B cell (primary cell): ENCODE measurements at regions of chr7 and their contacts with region 1.

Region 1: DNA sequence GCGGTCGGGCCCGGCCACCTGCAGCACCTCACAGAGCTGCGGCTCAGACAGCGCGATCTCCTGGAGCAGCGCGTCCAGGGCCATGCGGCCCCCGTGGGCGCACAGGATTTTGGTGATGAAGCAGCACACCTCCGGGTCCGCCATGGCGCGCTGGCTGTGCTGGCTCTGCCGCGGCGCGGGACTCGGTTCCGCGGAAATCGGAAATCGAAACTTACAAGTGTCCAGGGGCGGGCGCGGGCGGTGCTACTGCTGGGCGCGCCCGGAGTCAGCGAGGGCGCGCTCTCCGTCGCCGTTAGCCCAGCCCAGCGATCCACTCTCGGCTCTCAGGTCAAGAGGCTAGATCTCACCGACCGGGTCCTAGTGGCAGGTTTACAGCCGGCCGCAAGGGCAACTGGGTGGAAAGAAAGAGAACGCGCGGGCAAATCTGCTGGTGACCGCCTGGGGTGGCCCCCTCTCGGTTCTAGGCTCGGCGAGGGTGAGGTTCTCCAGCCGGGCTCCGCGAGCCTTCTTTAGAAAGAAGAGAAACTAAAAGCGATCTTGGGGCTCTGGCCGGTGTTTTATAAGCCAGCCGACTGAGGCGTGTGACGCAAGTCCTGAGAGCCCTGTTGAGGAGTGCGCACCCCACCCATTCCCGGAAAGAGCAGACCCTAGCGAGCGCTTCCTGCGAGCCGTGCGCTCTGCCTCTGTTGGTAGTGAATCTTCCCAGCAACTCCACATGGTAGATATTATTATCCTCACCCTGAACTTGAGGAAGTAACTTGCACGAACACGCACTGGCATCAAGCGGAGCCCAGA is at the start of gene ZC3HAV1:
- DNase-seq: peak; percentile 94
- ATAC-seq: peak; percentile 78
- H3K4me3 ChIP-seq: peak within 1 kb of the TSS; percentile 85 to 98 (median 95)
- H3K4me3 Mint-ChIP-seq: peak within 1 kb of the TSS; percentile 88
- H3K27ac ChIP-seq: peak within 1 kb of the TSS; percentile 90 to 96
- H3K27ac Mint-ChIP-seq: peak within 1 kb of the TSS; percentile 99
- H3K4me1 ChIP-seq: peaks cover 18 to 26% of the 10 kb centered on the region in 2 donors
- H3K4me1 Mint-ChIP-seq: peaks cover 34% of the 10 kb centered on the region
- H3K27me3 ChIP-seq: no peaks in the 10 kb centered on the region
- H3K27me3 Mint-ChIP-seq: no peaks in the 10 kb centered on the region
- CTCF ChIP-seq: no peak
- total RNA-seq, gene ZC3HAV1: 101 TPM in 2 replicates

Region 2: GRCh38 chr7:139133335-139134139 is 24.2 kb after region 1 on chr7:
- CTCF ChIA-PET with region 1: no interaction called
- POLR2A ChIA-PET with region 1: interaction called, 9 read pairs
- intact Hi-C with region 1: loop called (anchors 1 kb)
- DNase-seq: peak; percentile 90
- ATAC-seq: peak; percentile 96
- H3K4me3 ChIP-seq: peak overlapping the region; percentile 46 to 63 (median 58)
- H3K4me3 Mint-ChIP-seq: peak overlapping the region; percentile 93
- H3K27ac ChIP-seq: peak overlapping the region; percentile 18 to 69
- H3K27ac Mint-ChIP-seq: peak overlapping the region; percentile 88
- H3K4me1 ChIP-seq: peaks cover 9 to 13% of the 10 kb centered on the region in 2 donors
- H3K4me1 Mint-ChIP-seq: peaks cover 18% of the 10 kb centered on the region
- H3K27me3 ChIP-seq: no peaks in the 10 kb centered on the region
- H3K27me3 Mint-ChIP-seq: no peaks in the 10 kb centered on the region
- CTCF ChIP-seq: no peak

Region 3: GRCh38 chr7:139359366-139360209 is 250.2 kb after region 1 on chr7 and contains the start of gene LUC7L2:
- CTCF ChIA-PET with region 1: no interaction called
- POLR2A ChIA-PET with region 1: no interaction called
- intact Hi-C with region 1: loop called (anchors 1 kb)
- DNase-seq: peak; percentile 99
- ATAC-seq: peak; percentile 77
- H3K4me3 ChIP-seq: peak within 1 kb of the TSS; percentile 91 to 96 (median 96)
- H3K4me3 Mint-ChIP-seq: peak within 1 kb of the TSS; percentile 99
- H3K27ac ChIP-seq: peak within 1 kb of the TSS; percentile 98 to 99
- H3K27ac Mint-ChIP-seq: peak within 1 kb of the TSS; percentile 100
- H3K4me1 ChIP-seq: peaks cover 7 to 24% of the 10 kb centered on the region in 2 donors
- H3K4me1 Mint-ChIP-seq: peaks cover 39% of the 10 kb centered on the region
- H3K27me3 ChIP-seq: no peaks in the 10 kb centered on the region
- H3K27me3 Mint-ChIP-seq: no peaks in the 10 kb centered on the region
- CTCF ChIP-seq: no peak
- total RNA-seq, gene LUC7L2: 141 and 142 TPM in 2 replicates